K562 (cell line): ENCODE measurements at regions of chr7 and their contacts with region 1.

Region 1: DNA sequence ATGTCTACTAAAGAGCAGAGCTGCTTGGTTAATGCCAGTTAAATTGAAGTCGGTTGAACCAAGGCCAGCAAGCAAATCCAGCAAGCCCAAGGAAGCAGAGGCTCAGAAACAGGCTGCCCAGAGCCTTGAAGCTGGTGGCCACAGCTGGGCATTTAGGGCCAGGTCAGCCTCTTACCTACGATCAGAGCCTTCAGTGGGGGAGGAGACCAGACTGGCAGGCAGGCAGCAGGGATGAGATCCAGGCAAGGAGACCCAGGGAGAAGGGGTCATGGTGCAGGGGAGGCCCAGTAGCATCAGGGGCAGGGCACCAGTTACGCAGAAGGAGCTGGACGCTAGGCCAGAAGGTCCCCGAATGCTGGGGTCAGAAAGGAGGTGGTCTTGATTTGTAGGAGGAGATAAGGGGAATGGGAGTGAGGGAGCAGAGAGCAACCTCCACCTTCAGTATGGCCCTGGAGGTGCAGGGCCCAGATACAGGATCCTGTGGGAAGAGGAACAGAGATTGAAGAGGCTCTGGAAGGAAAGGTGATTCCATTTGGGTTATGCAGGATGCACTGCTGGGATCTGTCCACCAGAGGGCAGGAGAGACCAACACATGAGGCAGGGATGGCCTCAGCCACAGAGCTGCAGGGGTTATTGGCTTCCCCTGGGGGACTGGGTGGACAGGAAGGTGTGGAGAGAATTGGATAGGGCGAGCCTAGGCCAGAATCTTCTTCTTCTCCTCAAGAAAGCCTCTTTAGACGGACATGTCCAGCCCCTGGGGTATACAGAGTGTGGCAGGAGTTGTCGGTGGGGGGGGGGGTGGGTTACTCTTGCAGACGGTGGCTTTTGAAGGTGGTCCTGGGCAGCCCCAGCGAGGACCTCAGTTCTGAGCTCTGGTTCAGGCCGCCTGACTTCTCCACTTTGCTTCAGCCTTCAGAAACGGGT is 132.6 kb upstream of the PODXL start:
- DNase-seq: peak; percentile 83 to 96 (median 94)
- ATAC-seq: peak; percentile 87
- H3K4me3 ChIP-seq: no peak overlapping the region
- H3K27ac ChIP-seq: no peak overlapping the region
- H3K4me1 ChIP-seq: peaks cover 0 to 8% of the 10 kb centered on the region in 2 experiments; a peak in 2 of 5 replicates
- H3K27me3 ChIP-seq: peaks cover 22 to 66% of the 10 kb centered on the region in 2 experiments
- CTCF ChIP-seq: peak; percentile 93 to 99 (median 98)
- EP300 ChIP-seq: no peak
- POLR2A ChIP-seq: no peak
- RAD21 ChIP-seq: peak; percentile 90 to 96

Region 2: DNA sequence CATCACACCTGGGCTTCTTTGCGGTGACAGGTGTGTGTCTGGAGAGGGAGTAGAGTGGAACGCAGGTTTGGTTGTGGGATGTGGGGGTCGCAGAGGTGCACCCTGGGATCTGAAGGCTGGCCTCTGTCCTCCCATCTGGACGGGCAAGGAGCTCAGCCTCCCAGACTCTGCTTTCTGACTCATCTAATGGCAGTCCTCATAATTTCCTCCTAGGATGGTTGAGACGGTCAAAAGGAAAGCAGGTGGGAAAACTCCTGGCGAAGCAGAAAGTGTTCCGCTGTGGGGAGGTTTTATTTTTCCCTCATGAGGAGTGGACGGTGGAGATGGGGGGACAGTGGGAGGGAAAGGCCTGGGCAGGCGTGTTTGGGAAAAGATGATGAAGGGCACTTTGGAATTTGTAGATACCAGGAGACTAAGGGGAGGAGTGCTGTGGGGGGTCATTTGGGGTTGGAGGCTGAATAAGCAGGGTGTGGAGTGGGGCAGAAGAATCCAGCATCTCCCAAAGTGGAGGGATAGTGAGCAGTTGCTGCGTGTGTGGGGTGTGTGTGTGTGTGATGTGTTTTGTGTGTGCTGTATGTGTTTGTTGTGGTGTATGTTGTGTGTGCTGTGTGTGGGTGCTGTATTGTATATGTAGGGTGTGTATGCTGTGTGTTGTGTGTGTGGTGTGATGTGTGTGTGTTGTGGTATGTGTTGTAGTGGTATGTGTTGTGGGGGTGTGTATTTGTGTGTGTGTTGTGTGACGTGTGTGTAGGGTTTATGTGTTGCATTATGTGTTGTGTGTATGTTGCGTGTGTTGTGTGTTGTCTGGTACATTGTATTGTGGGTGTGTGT is 35.4 kb before region 1 on chr7:
- CTCF ChIA-PET with region 1: no interaction called
- POLR2A ChIA-PET with region 1: no interaction called
- in situ Hi-C with region 1: no loop called
- intact Hi-C with region 1: no loop called
- DNase-seq: no peak
- ATAC-seq: no peak
- H3K4me3 ChIP-seq: no peak overlapping the region
- H3K27ac ChIP-seq: no peak overlapping the region
- H3K4me1 ChIP-seq: no peaks in the 10 kb centered on the region
- H3K27me3 ChIP-seq: peaks cover 13 to 40% of the 10 kb centered on the region in 2 experiments
- CTCF ChIP-seq: no peak
- EP300 ChIP-seq: no peak
- POLR2A ChIP-seq: no peak
- RAD21 ChIP-seq: no peak

Region 3: GRCh38 chr7:131753620-131754222 is 64.7 kb after region 1 on chr7:
- CTCF ChIA-PET with region 1: no interaction called
- POLR2A ChIA-PET with region 1: no interaction called
- in situ Hi-C with region 1: no loop called
- intact Hi-C with region 1: no loop called
- DNase-seq: peak in 2 of 4 experiments; percentile 40 to 51
- ATAC-seq: peak; percentile 93
- H3K4me3 ChIP-seq: no peak overlapping the region
- H3K27ac ChIP-seq: no peak overlapping the region
- H3K4me1 ChIP-seq: no peaks in the 10 kb centered on the region
- H3K27me3 ChIP-seq: peaks cover 0 to 28% of the 10 kb centered on the region in 2 experiments; a peak in 4 of 5 replicates
- CTCF ChIP-seq: peak; percentile 64 to 73 (median 65)
- EP300 ChIP-seq: no peak
- POLR2A ChIP-seq: no peak
- RAD21 ChIP-seq: peak in 1 of 2 experiments; percentile 39; a peak in 2 of 4 replicates

Region 4: GRCh38 chr7:131859147-131859821 is 170.3 kb after region 1 on chr7:
- CTCF ChIA-PET with region 1: no interaction called
- POLR2A ChIA-PET with region 1: interaction called, 3 read pairs
- in situ Hi-C with region 1: no loop called
- intact Hi-C with region 1: loop called (anchors 2 kb)
- DNase-seq: peak; percentile 72 to 87 (median 84)
- ATAC-seq: peak; percentile 100
- H3K4me3 ChIP-seq: no peak overlapping the region
- H3K27ac ChIP-seq: no peak overlapping the region
- H3K4me1 ChIP-seq: no peaks in the 10 kb centered on the region
- H3K27me3 ChIP-seq: no peaks in the 10 kb centered on the region
- CTCF ChIP-seq: peak; percentile 83 to 95 (median 87)
- EP300 ChIP-seq: no peak
- POLR2A ChIP-seq: no peak
- RAD21 ChIP-seq: peak; percentile 51 to 74; a peak in 3 of 4 replicates

Region 5: GRCh38 chr7:132049462-132050304 is 360.7 kb after region 1 on chr7:
- CTCF ChIA-PET with region 1: no interaction called
- POLR2A ChIA-PET with region 1: no interaction called
- in situ Hi-C with region 1: loop called (anchors 10 kb)
- intact Hi-C with region 1: loop called (anchors 1 kb)
- DNase-seq: peak; percentile 50 to 65 (median 60)
- ATAC-seq: peak; percentile 75
- H3K4me3 ChIP-seq: no peak overlapping the region
- H3K27ac ChIP-seq: no peak overlapping the region
- H3K4me1 ChIP-seq: no peaks in the 10 kb centered on the region
- H3K27me3 ChIP-seq: no peaks in the 10 kb centered on the region
- CTCF ChIP-seq: peak; percentile 66 to 86 (median 80)
- EP300 ChIP-seq: no peak
- POLR2A ChIP-seq: no peak
- RAD21 ChIP-seq: peak; percentile 20 to 41; a peak in 2 of 4 replicates

Region 6: DNA sequence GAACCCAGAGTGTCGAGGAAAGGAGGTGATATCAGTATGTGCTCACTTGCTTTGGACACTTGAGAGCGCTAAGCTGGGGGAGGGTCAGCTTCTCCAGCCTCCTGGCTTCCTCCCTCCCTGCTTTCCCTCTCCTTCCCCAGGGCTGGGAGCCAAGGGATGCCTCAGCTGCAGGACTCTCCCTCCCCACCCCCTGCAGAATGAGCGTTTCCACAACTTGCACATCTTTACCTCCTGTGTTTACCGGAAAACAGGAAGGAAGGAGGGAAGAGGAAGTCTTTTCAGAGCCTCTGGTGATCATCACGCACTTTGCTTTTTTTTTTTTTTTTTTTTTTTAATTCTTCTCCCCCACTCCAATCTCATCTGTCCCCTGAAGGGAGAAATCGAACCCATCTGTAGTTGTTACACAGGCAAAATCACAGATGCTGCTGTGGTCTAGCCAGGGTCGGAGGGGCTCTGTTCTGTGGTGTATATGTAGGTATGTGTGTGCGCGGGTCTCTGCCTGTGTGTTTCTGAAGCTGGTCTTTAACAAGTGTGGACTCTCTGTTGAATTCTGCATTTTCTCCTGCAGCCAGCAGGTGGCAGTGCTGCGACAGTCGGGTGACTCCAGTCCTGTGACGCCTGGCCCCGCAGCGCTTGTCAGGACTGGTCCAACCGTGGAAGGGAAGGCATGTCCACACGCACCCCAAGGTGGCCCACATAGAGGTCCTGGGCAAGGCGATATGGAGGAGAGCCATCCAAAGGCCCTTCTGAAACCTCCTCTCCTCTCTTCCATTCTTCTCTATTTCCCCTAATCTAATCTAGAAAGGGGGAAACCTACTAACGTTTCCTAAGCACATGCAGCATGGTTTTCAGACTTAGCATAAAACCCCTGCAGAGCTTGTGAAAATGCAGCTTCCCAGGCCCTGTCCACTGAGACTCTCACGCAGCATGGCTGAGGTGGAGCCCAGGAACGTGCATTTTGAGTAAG is 629.6 kb after region 1 on chr7:
- CTCF ChIA-PET with region 1: no interaction called
- POLR2A ChIA-PET with region 1: interaction called, 3 read pairs
- in situ Hi-C with region 1: no loop called
- intact Hi-C with region 1: loop called (anchors 10 kb)
- DNase-seq: peak; percentile 88 to 95 (median 92)
- ATAC-seq: peak; percentile 99
- H3K4me3 ChIP-seq: no peak overlapping the region
- H3K27ac ChIP-seq: no peak overlapping the region
- H3K4me1 ChIP-seq: no peaks in the 10 kb centered on the region
- H3K27me3 ChIP-seq: peaks cover 6 to 28% of the 10 kb centered on the region in 2 experiments; a peak in 4 of 5 replicates
- CTCF ChIP-seq: peak; percentile 89 to 97 (median 95)
- EP300 ChIP-seq: no peak
- POLR2A ChIP-seq: no peak
- RAD21 ChIP-seq: peak; percentile 88 to 93

Region 7: DNA sequence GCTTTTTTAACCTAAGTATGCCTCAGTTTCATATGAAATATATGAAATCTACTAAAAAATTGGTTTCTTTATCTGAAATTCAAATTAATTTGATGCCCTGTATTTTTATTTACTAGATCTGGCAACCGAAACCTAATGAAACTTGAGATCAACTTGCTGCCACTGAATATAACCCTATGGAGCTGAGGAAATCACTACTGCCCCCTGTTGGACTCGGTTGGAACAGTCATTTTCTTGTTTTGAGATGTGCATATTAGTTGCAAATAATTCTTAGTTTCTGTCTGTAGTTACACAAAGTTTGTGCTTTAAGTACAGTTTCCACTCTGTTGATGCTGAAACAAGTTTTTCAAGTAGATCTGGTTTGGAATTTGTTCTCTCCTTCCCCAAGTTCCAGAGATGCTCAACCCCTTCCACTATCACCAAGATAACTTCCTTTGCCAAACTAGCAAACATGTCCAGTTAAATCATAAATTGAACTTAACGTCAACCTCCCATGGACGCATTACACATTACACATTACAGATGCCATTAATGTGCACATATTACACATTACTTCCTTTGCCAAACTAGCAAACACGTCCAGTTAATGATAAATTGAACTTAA is 1541.7 kb after region 1 on chr7:
- CTCF ChIA-PET with region 1: no interaction called
- POLR2A ChIA-PET with region 1: no interaction called
- in situ Hi-C with region 1: no loop called
- intact Hi-C with region 1: loop called (anchors 10 kb)
- DNase-seq: peak; percentile 65 to 81 (median 76)
- ATAC-seq: peak; percentile 86
- H3K4me3 ChIP-seq: no peak overlapping the region
- H3K27ac ChIP-seq: no peak overlapping the region
- H3K4me1 ChIP-seq: no peaks in the 10 kb centered on the region
- H3K27me3 ChIP-seq: peaks cover 24 to 35% of the 10 kb centered on the region in 2 experiments
- CTCF ChIP-seq: peak; percentile 67 to 90 (median 85)
- EP300 ChIP-seq: no peak
- POLR2A ChIP-seq: no peak
- RAD21 ChIP-seq: peak; percentile 52 to 77